PC-3 (cell line): ENCODE measurements at regions of chr7 and their contacts with region 1.

Region 1: DNA sequence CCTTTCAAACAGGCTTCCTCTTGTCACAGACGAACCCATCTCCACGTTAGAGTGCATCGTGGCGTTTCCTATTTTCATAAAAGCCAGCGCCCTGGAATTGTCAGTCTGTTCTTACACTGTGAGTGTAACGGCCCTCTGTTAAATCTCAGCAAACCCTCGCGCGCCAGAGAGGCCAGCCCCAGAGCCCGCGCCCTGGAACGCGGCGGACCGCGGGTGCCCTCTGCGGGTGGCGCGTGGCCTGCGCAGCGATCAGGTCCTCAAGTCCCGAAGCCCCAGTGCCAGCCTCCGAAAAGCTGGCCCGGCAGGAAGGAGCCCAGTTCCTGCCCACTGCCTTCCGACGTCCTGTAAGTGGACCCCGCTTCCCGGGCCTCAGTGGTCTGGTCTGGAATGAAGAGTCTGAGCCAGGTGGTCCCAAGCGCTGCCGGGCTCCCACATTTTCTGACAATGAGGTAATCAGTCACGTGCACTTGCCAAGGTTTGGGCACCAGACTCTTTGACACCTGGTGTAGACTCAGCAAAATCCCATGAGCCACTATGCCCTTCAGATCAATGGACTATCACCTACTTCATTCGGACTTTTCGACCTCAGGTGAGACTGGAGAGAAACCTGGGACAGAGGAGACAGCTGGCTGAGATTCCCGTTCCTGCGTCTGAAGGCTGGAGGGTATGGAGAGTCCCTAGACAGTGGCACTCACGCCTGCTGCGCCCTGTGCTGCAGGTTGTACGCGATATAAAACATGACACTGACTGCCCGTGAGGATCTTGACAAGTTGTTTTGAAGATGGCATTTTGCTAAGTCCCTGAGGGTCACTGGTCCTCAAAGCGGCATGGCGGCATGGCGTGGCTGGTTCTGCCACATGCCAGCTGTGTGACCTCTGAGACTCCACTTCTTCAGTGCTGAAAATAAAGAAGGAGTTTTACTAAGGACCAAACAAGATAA is 109.4 kb upstream of the LANCL2 start:
- DNase-seq: peak; percentile 85
- ATAC-seq: peak; percentile 84
- H3K4me3 ChIP-seq: peak overlapping the region; percentile 72
- H3K27ac ChIP-seq: peak overlapping the region; percentile 47
- H3K4me1 ChIP-seq: peaks cover 9% of the 10 kb centered on the region; the same call in 1 of the 2 replicates
- H3K27me3 ChIP-seq: no peaks in the 10 kb centered on the region
- CTCF ChIP-seq: peak; percentile 90

Region 2: DNA sequence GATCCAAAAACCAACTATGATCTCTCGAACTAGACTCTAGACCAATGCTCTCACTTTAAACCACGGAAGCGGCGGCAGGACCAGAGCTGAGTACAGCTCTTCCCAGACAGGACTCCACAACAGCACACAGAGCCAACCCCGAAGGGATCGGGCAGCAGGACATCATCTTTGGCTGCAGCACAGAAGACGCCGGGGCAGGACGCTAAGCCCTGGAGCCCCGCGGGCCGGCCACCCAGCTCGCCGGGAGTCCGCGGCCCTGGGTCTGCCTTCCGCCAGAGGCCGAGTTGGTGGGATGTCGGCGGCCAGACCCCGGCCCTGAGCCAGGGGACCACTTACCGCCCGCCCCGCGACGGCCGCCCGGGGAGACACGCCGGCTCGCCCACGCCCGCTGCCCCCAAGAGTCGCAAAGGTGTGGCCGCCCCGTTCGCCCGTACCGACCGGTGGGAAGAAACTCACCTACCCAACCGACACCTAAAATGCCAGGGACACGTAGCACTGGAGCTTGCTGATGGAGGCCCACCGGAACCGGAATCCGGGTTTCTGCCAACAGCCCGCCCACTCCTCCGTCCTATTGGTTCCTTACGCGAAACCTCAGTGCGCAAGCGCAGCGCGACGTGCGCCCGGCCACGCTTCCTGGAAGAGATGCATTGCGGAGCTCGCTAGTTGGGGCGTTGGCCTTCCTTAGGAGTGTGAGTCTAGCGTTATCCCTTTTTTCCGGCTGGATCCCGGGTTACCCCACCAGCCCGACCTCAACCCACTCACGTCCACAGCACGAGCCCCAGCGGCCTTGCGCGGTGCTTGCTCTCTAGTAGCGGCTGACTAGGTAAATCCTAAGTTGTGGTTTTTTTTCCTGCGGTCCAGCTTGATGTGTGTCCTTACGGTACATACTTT is 496.8 kb before region 1 on chr7 and contains the start of gene SEC61G:
- CTCF ChIA-PET with region 1: interaction called, 12 read pairs
- POLR2A ChIA-PET with region 1: no interaction called
- intact Hi-C with region 1: no loop called
- DNase-seq: peak; percentile 98
- ATAC-seq: peak; percentile 96
- H3K4me3 ChIP-seq: peak within 1 kb of the TSS; percentile 94
- H3K27ac ChIP-seq: peak within 1 kb of the TSS; percentile 43
- H3K4me1 ChIP-seq: peaks cover 15% of the 10 kb centered on the region; the same call in 1 of the 2 replicates
- H3K27me3 ChIP-seq: no peaks in the 10 kb centered on the region
- CTCF ChIP-seq: no peak
- total RNA-seq, gene SEC61G: 128 and 177 TPM in 2 replicates

Region 3: GRCh38 chr7:54877683-54878082 is 378.1 kb before region 1 on chr7:
- CTCF ChIA-PET with region 1: interaction called, 11 read pairs
- POLR2A ChIA-PET with region 1: no interaction called
- intact Hi-C with region 1: loop called (anchors 2 kb)
- DNase-seq: peak; percentile 54
- ATAC-seq: peak; percentile 35
- H3K4me3 ChIP-seq: no peak overlapping the region
- H3K27ac ChIP-seq: no peak overlapping the region
- H3K4me1 ChIP-seq: peaks cover 30% of the 10 kb centered on the region
- H3K27me3 ChIP-seq: no peaks in the 10 kb centered on the region
- CTCF ChIP-seq: peak; percentile 56

Region 4: GRCh38 chr7:54932818-54933543 is 322.8 kb before region 1 on chr7:
- CTCF ChIA-PET with region 1: no interaction called
- POLR2A ChIA-PET with region 1: no interaction called
- intact Hi-C with region 1: no loop called
- DNase-seq: peak; percentile 73
- ATAC-seq: peak; percentile 99
- H3K4me3 ChIP-seq: peak overlapping the region; percentile 62
- H3K27ac ChIP-seq: no peak overlapping the region
- H3K4me1 ChIP-seq: peaks cover 9% of the 10 kb centered on the region
- H3K27me3 ChIP-seq: no peaks in the 10 kb centered on the region
- CTCF ChIP-seq: no peak

Region 5: DNA sequence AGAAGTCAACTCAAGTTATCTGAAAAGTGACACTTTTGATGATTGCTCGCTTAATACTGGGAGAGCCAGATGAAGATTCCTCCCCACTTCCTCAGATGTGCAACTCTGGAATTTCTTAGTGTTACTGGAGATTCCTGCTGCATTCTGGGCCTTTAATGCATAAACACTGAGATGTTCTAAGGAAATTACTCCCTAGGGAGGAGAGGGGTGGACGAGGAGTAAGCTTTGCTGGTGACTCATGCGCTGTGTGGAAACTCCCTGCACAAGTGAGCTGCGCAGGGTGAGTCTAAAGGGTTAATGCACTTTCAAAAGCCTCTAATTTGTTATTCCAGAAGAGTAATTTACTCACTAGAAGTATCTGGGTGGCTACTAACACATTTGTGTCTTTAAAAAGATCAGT is 190.7 kb before region 1 on chr7:
- CTCF ChIA-PET with region 1: no interaction called
- POLR2A ChIA-PET with region 1: no interaction called
- intact Hi-C with region 1: loop called (anchors 1 kb)
- DNase-seq: peak; percentile 89
- ATAC-seq: peak; percentile 88
- H3K4me3 ChIP-seq: peak overlapping the region; percentile 46; the same call in 1 of the 2 replicates
- H3K27ac ChIP-seq: peak overlapping the region; percentile 97
- H3K4me1 ChIP-seq: peaks cover 48% of the 10 kb centered on the region
- H3K27me3 ChIP-seq: no peaks in the 10 kb centered on the region
- CTCF ChIP-seq: no peak

Region 6: GRCh38 chr7:55185941-55186609 is 69.7 kb before region 1 on chr7:
- CTCF ChIA-PET with region 1: interaction called, 3 read pairs
- POLR2A ChIA-PET with region 1: no interaction called
- intact Hi-C with region 1: loop called (anchors 5 kb)
- DNase-seq: peak; percentile 97
- ATAC-seq: peak; percentile 97
- H3K4me3 ChIP-seq: no peak overlapping the region
- H3K27ac ChIP-seq: peak overlapping the region; percentile 89
- H3K4me1 ChIP-seq: peaks cover 27% of the 10 kb centered on the region
- H3K27me3 ChIP-seq: no peaks in the 10 kb centered on the region
- CTCF ChIP-seq: no peak